WTC11 (cell line): ENCODE measurements at regions of chr1 and their contacts with region 1.

Region 1: DNA sequence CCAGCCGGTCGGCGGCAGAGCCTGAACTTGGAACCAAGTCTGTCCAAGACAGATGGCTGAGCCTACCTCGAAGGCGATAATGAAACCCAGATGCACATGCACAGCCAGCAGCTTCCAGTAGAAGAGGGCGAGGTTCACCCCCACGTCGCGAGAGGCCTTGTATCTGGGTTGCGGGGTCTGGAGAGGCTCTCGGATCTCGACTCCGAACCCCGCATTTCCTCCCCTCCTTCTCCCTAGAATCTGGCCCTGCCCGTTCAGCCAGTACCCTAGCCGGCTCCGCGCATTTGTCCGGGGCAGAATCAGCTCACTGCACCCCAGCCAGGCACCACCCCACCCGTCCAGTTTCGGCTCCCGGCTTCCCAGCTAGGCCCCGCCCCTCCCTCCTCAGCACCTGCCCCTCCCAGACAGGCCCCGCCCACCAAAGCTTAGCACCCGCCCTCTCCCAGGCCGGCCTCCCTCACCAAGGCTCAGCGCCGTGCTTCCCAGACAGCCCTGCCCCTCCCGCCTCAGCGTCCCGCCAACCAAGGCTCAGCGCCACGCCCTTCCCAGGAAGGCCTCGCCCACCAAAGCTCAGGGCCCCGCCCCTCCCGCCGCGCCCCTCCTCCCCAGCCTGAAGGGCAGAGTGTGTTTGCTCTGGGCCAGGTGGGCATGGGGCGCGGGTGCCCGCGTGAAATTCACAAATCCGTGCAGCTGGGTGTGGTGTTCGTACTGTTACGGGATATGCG is 4.8 kb upstream of the ARHGEF19 start:
- DNase-seq: peak; percentile 100
- ATAC-seq: peak; percentile 87
- H3K4me3 Mint-ChIP-seq: peak overlapping the region; percentile 92
- H3K27ac Mint-ChIP-seq: no peak overlapping the region
- H3K4me1 Mint-ChIP-seq: peaks cover 26% of the 10 kb centered on the region
- H3K27me3 Mint-ChIP-seq: peaks cover 36% of the 10 kb centered on the region
- CTCF ChIP-seq: no peak

Region 2: GRCh38 chr1:16206547-16207317 is 10.5 kb before region 1 on chr1:
- CTCF ChIA-PET with region 1: interaction called, 25 read pairs
- POLR2A ChIA-PET with region 1: interaction called, 13 read pairs
- DNase-seq: peak; percentile 99
- ATAC-seq: peak; percentile 92
- H3K4me3 Mint-ChIP-seq: peak overlapping the region; percentile 89
- H3K27ac Mint-ChIP-seq: peak overlapping the region; percentile 98
- H3K4me1 Mint-ChIP-seq: peaks cover 35% of the 10 kb centered on the region
- H3K27me3 Mint-ChIP-seq: no peaks in the 10 kb centered on the region
- CTCF ChIP-seq: no peak